ENCODE measurements at regions of chr9 and their contacts with region 1.

Region 1: DNA sequence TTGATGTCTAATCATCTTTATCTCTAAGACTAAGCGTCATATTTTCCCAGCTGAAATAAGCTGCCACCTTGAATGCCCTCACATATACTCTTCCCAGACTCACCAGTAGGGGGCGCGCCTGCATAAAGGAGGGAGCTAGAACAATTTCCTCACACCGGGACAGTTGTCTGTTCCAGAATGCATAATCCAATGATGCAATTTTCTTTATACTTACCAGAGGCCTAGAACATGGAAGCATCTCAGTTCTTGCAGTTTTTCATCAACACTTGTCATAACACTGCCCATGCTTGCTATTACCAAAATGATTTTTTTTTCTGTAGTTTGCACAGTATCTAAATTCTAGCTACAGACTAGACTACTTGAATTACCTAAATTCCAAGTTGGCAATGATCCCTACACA is 203.9 kb downstream of the FRMD3 start:
- DNase-seq: peak; percentile 85
- H3K4me3 Mint-ChIP-seq: no peak overlapping the region
- H3K27ac Mint-ChIP-seq: no peak overlapping the region
- H3K4me1 Mint-ChIP-seq: no peaks in the 10 kb centered on the region
- H3K27me3 Mint-ChIP-seq: no peaks in the 10 kb centered on the region

Region 2: DNA sequence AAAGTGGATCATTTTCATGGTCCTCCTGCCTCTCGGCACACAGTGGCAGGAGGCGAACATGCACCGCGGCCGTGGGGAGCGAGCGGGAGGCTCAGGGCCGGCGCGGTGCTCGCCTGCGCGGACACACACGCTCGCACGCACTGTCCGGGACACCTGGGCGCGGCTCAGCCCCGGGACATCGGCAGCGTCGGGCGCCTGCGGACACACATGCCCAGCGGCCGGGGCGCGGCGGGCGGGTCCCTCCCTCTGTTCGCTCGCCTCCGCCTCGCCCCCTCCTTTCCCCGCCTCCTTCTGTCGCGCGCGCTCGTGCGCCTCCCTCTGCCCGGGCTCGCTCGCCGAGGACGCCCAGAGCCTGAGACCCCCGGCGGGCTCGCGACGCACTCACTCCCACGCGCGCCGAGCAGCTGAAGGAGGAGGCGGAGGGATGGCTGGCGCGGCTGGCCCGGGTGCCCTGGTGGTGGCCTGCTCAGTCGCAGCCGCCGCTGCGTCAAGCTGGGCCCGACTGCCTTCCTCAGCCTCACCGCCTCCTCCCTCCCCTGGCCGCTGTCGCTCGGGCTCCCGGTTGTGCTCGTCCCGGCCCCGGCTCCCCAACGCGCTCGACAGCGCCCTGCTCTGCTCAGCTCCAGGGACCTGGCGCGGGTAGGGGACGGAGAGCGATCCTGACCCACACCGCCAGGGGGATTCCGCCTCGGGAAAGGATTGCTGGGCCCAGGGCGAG is 204.0 kb after region 1 on chr9 and contains the start of gene FRMD3:
- CTCF ChIA-PET with region 1: interaction called, 111 read pairs
- POLR2A ChIA-PET with region 1: no interaction called
- intact Hi-C with region 1: no loop called
- DNase-seq: peak; percentile 35
- H3K4me3 Mint-ChIP-seq: peak within 1 kb of the TSS; percentile 8
- H3K27ac Mint-ChIP-seq: no peak within 1 kb of the TSS
- H3K4me1 Mint-ChIP-seq: peaks cover 6% of the 10 kb centered on the region
- H3K27me3 Mint-ChIP-seq: peaks cover 21% of the 10 kb centered on the region
- total RNA-seq, gene FRMD3: 0.27 to 0.62 TPM

Region 3: GRCh38 chr9:83544002-83544698 is 209.8 kb after region 1 on chr9:
- CTCF ChIA-PET with region 1: interaction called, 111 read pairs
- POLR2A ChIA-PET with region 1: interaction called, 3 read pairs
- intact Hi-C with region 1: loop called (anchors 1 kb)
- DNase-seq: no peak
- H3K4me3 Mint-ChIP-seq: no peak overlapping the region
- H3K27ac Mint-ChIP-seq: no peak overlapping the region
- H3K4me1 Mint-ChIP-seq: peaks cover under 1% of the 10 kb centered on the region
- H3K27me3 Mint-ChIP-seq: peaks cover 9% of the 10 kb centered on the region

Region 4: DNA sequence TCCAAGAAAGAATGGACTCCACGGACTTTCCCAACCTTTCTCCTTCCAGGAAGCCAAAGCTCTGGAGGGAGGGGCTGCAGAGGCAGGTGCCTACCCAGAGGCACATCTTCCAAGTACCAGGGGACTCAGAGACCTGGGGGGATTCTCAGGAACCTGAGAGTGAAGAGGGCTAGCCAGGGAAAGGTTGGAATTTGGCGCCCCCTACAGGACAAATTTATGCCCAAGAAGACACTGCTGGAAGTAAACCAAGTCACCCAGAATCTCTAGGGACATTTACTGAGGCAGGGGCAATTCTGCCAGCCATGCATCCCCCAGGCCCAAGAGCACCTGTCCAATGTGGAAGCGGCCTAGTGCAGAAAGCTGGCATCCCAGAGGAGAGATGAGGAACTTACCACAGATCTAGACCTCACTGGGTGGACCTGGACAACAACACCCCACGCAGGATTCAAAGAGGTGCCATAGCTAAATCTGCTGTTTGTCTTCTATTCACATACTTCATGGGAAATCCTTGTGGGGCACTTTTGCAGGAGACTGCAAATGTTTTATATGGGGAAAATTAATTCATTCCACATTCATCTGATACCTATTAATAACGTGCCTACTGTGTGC is 262.7 kb after region 1 on chr9:
- CTCF ChIA-PET with region 1: interaction called, 51 read pairs
- POLR2A ChIA-PET with region 1: no interaction called
- intact Hi-C with region 1: loop called (anchors 1 kb)
- DNase-seq: peak; percentile 56
- H3K4me3 Mint-ChIP-seq: no peak overlapping the region
- H3K27ac Mint-ChIP-seq: no peak overlapping the region
- H3K4me1 Mint-ChIP-seq: no peaks in the 10 kb centered on the region
- H3K27me3 Mint-ChIP-seq: no peaks in the 10 kb centered on the region

Region 5: DNA sequence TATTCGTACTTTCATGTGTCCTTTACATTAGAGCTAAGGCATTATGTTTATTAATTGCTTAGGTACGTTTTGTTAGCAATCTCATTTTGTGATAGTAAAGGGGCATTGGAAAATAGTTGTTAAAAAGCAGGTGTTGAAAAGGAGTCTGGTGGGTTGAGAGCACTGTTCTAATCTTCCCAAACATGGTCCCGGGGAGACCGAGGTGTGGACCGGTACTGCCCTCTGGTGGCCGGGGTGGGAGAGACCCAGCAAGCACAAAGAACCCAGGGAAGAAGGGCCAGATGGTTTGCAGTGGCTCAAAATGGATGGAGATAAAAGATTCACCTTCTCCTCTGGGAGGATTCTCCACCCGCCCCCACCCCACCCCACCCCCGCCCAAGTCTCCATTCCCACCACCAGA is 314.8 kb after region 1 on chr9:
- CTCF ChIA-PET with region 1: interaction called, 22 read pairs
- POLR2A ChIA-PET with region 1: no interaction called
- intact Hi-C with region 1: loop called (anchors 1 kb)
- DNase-seq: peak; percentile 81
- H3K4me3 Mint-ChIP-seq: no peak overlapping the region
- H3K27ac Mint-ChIP-seq: no peak overlapping the region
- H3K4me1 Mint-ChIP-seq: peaks cover 1% of the 10 kb centered on the region
- H3K27me3 Mint-ChIP-seq: no peaks in the 10 kb centered on the region